ENCODE measurements at regions of chr6 and their contacts with region 1.

Region 1: GRCh38 chr6:27146706-27147505 is 100.6 kb upstream of the PRSS16 start:
- DNase-seq: peak; percentile 71 to 96 (median 92)
- ATAC-seq: peak; percentile 92
- H3K4me3 ChIP-seq: peak overlapping the region; percentile 90
- H3K4me3 Mint-ChIP-seq: no peak overlapping the region
- H3K27ac ChIP-seq: peak overlapping the region; percentile 89
- H3K27ac Mint-ChIP-seq: no peak overlapping the region
- H3K4me1 ChIP-seq: peaks cover 6 to 7% of the 10 kb centered on the region in 2 donors
- H3K4me1 Mint-ChIP-seq: peaks cover 0 to 26% (median 14%) of the 10 kb centered on the region in 7 donors
- H3K27me3 ChIP-seq: no peaks in the 10 kb centered on the region
- H3K27me3 Mint-ChIP-seq: no peaks in the 10 kb centered on the region

Region 2: DNA sequence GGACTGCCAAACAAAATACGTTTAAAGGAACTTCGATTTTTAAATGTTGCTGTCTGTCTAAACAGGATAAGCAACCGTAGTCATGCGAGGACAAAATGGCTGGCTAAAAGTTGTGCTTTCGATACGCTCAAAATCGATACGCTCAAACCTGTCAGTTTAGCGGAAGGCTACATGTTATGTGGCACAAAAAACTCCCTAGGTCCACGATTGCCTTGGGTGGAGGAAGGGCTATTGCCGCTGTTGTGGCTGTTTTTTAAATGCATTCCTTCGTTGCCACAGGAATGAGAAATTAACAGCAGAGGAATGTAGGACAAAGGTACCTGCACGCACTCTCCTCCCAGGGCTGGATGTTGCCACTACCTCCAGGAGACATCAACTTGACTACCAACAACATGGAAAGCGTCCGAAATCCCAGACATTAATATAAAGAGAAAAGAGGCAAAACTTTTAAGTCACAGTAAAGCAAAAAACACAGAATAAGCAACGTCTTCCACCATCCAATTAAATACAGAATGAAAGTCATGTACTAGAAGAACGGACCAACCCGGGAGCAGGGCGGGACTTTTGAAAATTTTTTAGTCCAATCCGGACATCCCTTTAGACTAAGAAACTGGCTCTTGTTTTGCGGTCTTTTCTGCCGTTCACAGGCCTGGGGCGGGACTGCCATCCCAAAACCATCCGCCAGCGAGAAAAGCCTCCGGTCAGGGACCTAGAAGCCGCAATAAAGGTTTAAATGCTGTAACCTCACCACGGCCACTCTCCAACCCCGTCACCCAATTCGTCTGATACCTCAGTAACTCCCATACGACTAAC is 1091.8 kb before region 1 on chr6:
- CTCF ChIA-PET with region 1: no interaction called
- POLR2A ChIA-PET with region 1: interaction called, 17 read pairs
- intact Hi-C with region 1: loop called in 1 of 2 experiments (anchors 1 kb)
- DNase-seq: peak; percentile 54 to 94 (median 90)
- ATAC-seq: peak; percentile 81
- H3K4me3 ChIP-seq: peak overlapping the region; percentile 93
- H3K4me3 Mint-ChIP-seq: peak overlapping the region; percentile 88 to 99 (median 95)
- H3K27ac ChIP-seq: peak overlapping the region; percentile 83
- H3K27ac Mint-ChIP-seq: peak overlapping the region; percentile 95 to 99 (median 98)
- H3K4me1 ChIP-seq: peaks cover 0 to 14% of the 10 kb centered on the region in 2 donors
- H3K4me1 Mint-ChIP-seq: peaks cover 9 to 52% (median 10%) of the 10 kb centered on the region in 7 donors
- H3K27me3 ChIP-seq: no peaks in the 10 kb centered on the region
- H3K27me3 Mint-ChIP-seq: peaks cover 0 to 10% (median 0%) of the 10 kb centered on the region in 5 donors

Region 3: GRCh38 chr6:26204332-26205165 is 942.4 kb before region 1 on chr6:
- CTCF ChIA-PET with region 1: no interaction called
- POLR2A ChIA-PET with region 1: interaction called, 86 read pairs
- intact Hi-C with region 1: loop called (anchors 2 kb)
- DNase-seq: peak; percentile 67 to 95 (median 89)
- ATAC-seq: peak; percentile 72
- H3K4me3 ChIP-seq: peak overlapping the region; percentile 77
- H3K4me3 Mint-ChIP-seq: no peak overlapping the region
- H3K27ac ChIP-seq: peak overlapping the region; percentile 90
- H3K27ac Mint-ChIP-seq: no peak overlapping the region
- H3K4me1 ChIP-seq: peaks cover 20 to 23% of the 10 kb centered on the region in 2 donors
- H3K4me1 Mint-ChIP-seq: peaks cover 9 to 36% (median 26%) of the 10 kb centered on the region in 7 donors
- H3K27me3 ChIP-seq: no peaks in the 10 kb centered on the region
- H3K27me3 Mint-ChIP-seq: peaks cover 0 to 5% (median 0%) of the 10 kb centered on the region in 5 donors

Region 4: GRCh38 chr6:27078734-27079357 is 68.1 kb before region 1 on chr6:
- CTCF ChIA-PET with region 1: no interaction called
- POLR2A ChIA-PET with region 1: no interaction called
- intact Hi-C with region 1: no loop called
- DNase-seq: peak in 7 of 9 donors; percentile 23 to 57 (median 39)
- ATAC-seq: peak; percentile 70
- H3K4me3 ChIP-seq: peak overlapping the region; percentile 45
- H3K4me3 Mint-ChIP-seq: peak overlapping the region; percentile 16 to 88 (median 74)
- H3K27ac ChIP-seq: no peak overlapping the region
- H3K27ac Mint-ChIP-seq: no peak overlapping the region
- H3K4me1 ChIP-seq: no peaks in the 10 kb centered on the region
- H3K4me1 Mint-ChIP-seq: peaks cover 0 to 8% (median 7%) of the 10 kb centered on the region in 7 donors
- H3K27me3 ChIP-seq: peaks cover 0 to 7% of the 10 kb centered on the region in 2 donors
- H3K27me3 Mint-ChIP-seq: peaks cover 34 to 71% (median 56%) of the 10 kb centered on the region in 5 donors

Region 5: DNA sequence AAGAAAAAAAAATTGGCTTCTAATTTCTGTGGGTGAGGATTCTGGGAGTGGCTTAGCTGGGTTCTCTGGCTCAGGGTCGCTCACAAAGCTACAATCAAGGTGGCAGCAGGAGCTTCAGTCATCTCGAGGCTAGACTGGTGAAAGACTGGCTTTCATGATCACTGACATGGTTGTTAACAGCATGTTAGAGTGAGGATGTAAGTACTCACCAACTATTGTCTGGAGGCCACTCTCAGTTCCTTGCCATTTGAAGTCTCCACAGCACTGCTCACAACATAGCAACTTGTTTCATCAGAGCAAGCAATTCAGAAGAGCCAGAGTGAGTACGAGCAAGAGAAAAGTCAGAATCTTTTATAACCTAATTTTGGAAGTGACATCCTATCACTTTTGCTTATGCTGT is 45.1 kb before region 1 on chr6:
- CTCF ChIA-PET with region 1: no interaction called
- POLR2A ChIA-PET with region 1: no interaction called
- intact Hi-C with region 1: no loop called
- DNase-seq: no peak
- ATAC-seq: no peak
- H3K4me3 ChIP-seq: no peak overlapping the region
- H3K4me3 Mint-ChIP-seq: no peak overlapping the region
- H3K27ac ChIP-seq: no peak overlapping the region
- H3K27ac Mint-ChIP-seq: no peak overlapping the region
- H3K4me1 ChIP-seq: peaks cover 0 to 7% of the 10 kb centered on the region in 2 donors
- H3K4me1 Mint-ChIP-seq: peaks cover 6 to 10% (median 8%) of the 10 kb centered on the region in 7 donors
- H3K27me3 ChIP-seq: peaks cover 0 to 6% of the 10 kb centered on the region in 2 donors
- H3K27me3 Mint-ChIP-seq: peaks cover 28 to 43% (median 36%) of the 10 kb centered on the region in 5 donors

Region 6: GRCh38 chr6:27126815-27127537 is 19.9 kb before region 1 on chr6:
- CTCF ChIA-PET with region 1: interaction called, 45 read pairs
- POLR2A ChIA-PET with region 1: interaction called, 795 read pairs
- intact Hi-C with region 1: loop called (anchors 1 kb)
- DNase-seq: peak; percentile 46 to 82 (median 77)
- ATAC-seq: peak; percentile 89
- H3K4me3 ChIP-seq: peak overlapping the region; percentile 33
- H3K4me3 Mint-ChIP-seq: peak overlapping the region; percentile 35 to 90 (median 77)
- H3K27ac ChIP-seq: no peak overlapping the region
- H3K27ac Mint-ChIP-seq: peak overlapping the region; percentile 41 to 93 (median 82)
- H3K4me1 ChIP-seq: peaks cover 4 to 6% of the 10 kb centered on the region in 2 donors
- H3K4me1 Mint-ChIP-seq: peaks cover 6 to 51% (median 15%) of the 10 kb centered on the region in 7 donors
- H3K27me3 ChIP-seq: no peaks in the 10 kb centered on the region
- H3K27me3 Mint-ChIP-seq: no peaks in the 10 kb centered on the region

Region 7: GRCh38 chr6:27224729-27225128 is 77.8 kb after region 1 on chr6:
- CTCF ChIA-PET with region 1: no interaction called
- POLR2A ChIA-PET with region 1: no interaction called
- intact Hi-C with region 1: no loop called
- DNase-seq: no peak
- ATAC-seq: no peak
- H3K4me3 ChIP-seq: no peak overlapping the region
- H3K4me3 Mint-ChIP-seq: no peak overlapping the region
- H3K27ac ChIP-seq: no peak overlapping the region
- H3K27ac Mint-ChIP-seq: no peak overlapping the region
- H3K4me1 ChIP-seq: no peaks in the 10 kb centered on the region
- H3K4me1 Mint-ChIP-seq: no peaks in the 10 kb centered on the region
- H3K27me3 ChIP-seq: peaks cover 7 to 9% of the 10 kb centered on the region in 2 donors
- H3K27me3 Mint-ChIP-seq: peaks cover 29 to 86% (median 82%) of the 10 kb centered on the region in 5 donors

Region 8: DNA sequence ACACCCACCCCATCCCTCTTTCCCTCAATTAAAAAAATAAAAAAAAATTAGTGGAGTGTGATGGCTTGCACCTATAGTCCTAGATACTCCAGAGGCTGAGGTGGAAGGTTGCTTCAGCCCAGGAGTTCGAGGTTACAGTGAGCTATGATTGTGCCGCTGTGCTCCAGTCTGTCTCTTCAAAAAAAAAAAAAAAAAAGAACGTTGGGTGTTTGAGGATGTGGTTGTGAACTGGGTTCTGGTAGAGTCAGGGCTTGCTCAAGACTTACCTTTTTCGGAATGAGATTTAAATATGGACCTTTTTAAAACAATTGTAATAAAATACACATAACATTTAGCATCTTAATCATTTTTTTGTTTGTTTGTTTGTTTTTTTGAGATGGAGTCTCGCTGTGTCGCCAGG is 553.4 kb after region 1 on chr6:
- CTCF ChIA-PET with region 1: no interaction called
- POLR2A ChIA-PET with region 1: no interaction called
- intact Hi-C with region 1: no loop called
- DNase-seq: no peak
- ATAC-seq: no peak
- H3K4me3 ChIP-seq: no peak overlapping the region
- H3K4me3 Mint-ChIP-seq: no peak overlapping the region
- H3K27ac ChIP-seq: no peak overlapping the region
- H3K27ac Mint-ChIP-seq: no peak overlapping the region
- H3K4me1 ChIP-seq: no peaks in the 10 kb centered on the region
- H3K4me1 Mint-ChIP-seq: peaks cover 7 to 14% (median 10%) of the 10 kb centered on the region in 7 donors
- H3K27me3 ChIP-seq: no peaks in the 10 kb centered on the region
- H3K27me3 Mint-ChIP-seq: peaks cover 0 to 3% (median 0%) of the 10 kb centered on the region in 5 donors

Region 9: GRCh38 chr6:27809939-27810767 is 663.2 kb after region 1 on chr6:
- CTCF ChIA-PET with region 1: interaction called, 3 read pairs
- POLR2A ChIA-PET with region 1: interaction called, 122 read pairs
- intact Hi-C with region 1: loop called (anchors 1 kb)
- DNase-seq: peak; percentile 66 to 96 (median 92)
- ATAC-seq: peak; percentile 71
- H3K4me3 ChIP-seq: peak overlapping the region; percentile 76
- H3K4me3 Mint-ChIP-seq: peak overlapping the region; percentile 81 to 97 (median 94)
- H3K27ac ChIP-seq: peak overlapping the region; percentile 86
- H3K27ac Mint-ChIP-seq: peak overlapping the region; percentile 95 to 99 (median 98)
- H3K4me1 ChIP-seq: peaks cover 20 to 42% of the 10 kb centered on the region in 2 donors
- H3K4me1 Mint-ChIP-seq: peaks cover 18 to 82% (median 61%) of the 10 kb centered on the region in 7 donors
- H3K27me3 ChIP-seq: no peaks in the 10 kb centered on the region
- H3K27me3 Mint-ChIP-seq: peaks cover 0 to 9% (median 0%) of the 10 kb centered on the region in 5 donors

Region 10: GRCh38 chr6:27871924-27872638 is 725.2 kb after region 1 on chr6:
- CTCF ChIA-PET with region 1: interaction called, 3 read pairs
- POLR2A ChIA-PET with region 1: interaction called, 160 read pairs
- intact Hi-C with region 1: loop called in 1 of 2 experiments (anchors 1 kb)
- DNase-seq: peak; percentile 68 to 97 (median 94)
- ATAC-seq: peak; percentile 88
- H3K4me3 ChIP-seq: peak overlapping the region; percentile 69
- H3K4me3 Mint-ChIP-seq: peak overlapping the region; percentile 83 to 99 (median 94)
- H3K27ac ChIP-seq: peak overlapping the region; percentile 84
- H3K27ac Mint-ChIP-seq: peak overlapping the region; percentile 95 to 98 (median 97)
- H3K4me1 ChIP-seq: peaks cover under 1 to 19% of the 10 kb centered on the region in 2 donors
- H3K4me1 Mint-ChIP-seq: peaks cover 15 to 69% (median 42%) of the 10 kb centered on the region in 7 donors
- H3K27me3 ChIP-seq: no peaks in the 10 kb centered on the region
- H3K27me3 Mint-ChIP-seq: peaks cover 0 to 8% (median 0%) of the 10 kb centered on the region in 5 donors